Panc1 (cell line): ENCODE measurements at regions of chrX and their contacts with region 1.

Region 1: GRCh38 chrX:121579016-121579760 is 531.8 kb downstream of the GLUD2 start:
- DNase-seq: peak; percentile 1
- ATAC-seq: no peak
- H3K4me3 ChIP-seq: no peak overlapping the region
- H3K27ac ChIP-seq: no peak overlapping the region
- H3K4me1 ChIP-seq: no peaks in the 10 kb centered on the region
- H3K27me3 ChIP-seq: no peaks in the 10 kb centered on the region
- CTCF ChIP-seq: peak; percentile 20; the same call in 1 of the 2 replicates

Region 2: DNA sequence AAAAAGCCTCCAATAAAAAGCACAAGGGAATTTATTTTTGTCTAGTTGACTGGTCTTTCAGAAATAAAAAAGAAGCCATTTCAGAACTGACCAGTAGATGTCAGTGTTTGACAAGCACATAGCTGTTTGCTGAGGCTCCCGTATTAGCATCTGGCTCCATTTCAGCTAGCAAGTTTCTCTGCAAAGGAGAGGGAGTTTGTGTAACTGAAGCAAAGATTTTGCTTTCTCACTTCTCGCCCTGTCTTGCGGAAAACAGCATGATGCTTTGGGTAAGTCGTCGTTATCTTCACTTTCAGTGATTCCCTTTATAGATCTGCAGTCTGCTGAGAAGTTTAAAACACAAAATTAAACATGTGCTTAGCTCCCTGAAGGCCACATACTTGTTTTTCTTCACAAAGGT is 789.1 kb before region 1 on chrX:
- CTCF ChIA-PET with region 1: no interaction called
- POLR2A ChIA-PET with region 1: no interaction called
- in situ Hi-C with region 1: no loop called
- intact Hi-C with region 1: loop called (anchors 10 kb)
- DNase-seq: peak; percentile 53
- ATAC-seq: peak; percentile 78; the same call in 1 of the 2 replicates
- H3K4me3 ChIP-seq: no peak overlapping the region
- H3K27ac ChIP-seq: no peak overlapping the region
- H3K4me1 ChIP-seq: no peaks in the 10 kb centered on the region; the same call in 1 of the 2 replicates
- H3K27me3 ChIP-seq: no peaks in the 10 kb centered on the region; the same call in 1 of the 2 replicates
- CTCF ChIP-seq: peak; percentile 82

Region 3: DNA sequence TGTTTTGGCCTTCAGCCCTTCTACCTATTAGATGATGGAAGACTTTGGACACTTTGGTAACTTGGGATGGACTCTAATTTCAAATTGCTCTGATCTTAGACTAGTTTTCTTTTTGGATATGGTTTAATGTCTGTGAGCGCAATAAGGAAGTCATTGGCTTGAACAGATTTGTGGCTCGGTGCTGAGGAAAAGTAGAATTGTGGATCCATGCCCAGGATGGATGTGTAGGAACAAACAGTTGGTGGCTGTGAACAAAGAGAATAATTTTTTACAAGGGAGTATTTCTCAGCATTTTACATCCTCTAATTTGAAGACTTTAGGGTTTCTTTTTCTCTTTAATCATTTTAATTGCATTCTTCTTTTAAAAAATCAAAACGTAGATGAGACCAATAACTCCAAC is 204.7 kb before region 1 on chrX:
- CTCF ChIA-PET with region 1: no interaction called
- POLR2A ChIA-PET with region 1: no interaction called
- in situ Hi-C with region 1: no loop called
- intact Hi-C with region 1: no loop called
- DNase-seq: no peak
- ATAC-seq: no peak
- H3K4me3 ChIP-seq: no peak overlapping the region
- H3K27ac ChIP-seq: no peak overlapping the region
- H3K4me1 ChIP-seq: no peaks in the 10 kb centered on the region
- H3K27me3 ChIP-seq: no peaks in the 10 kb centered on the region
- CTCF ChIP-seq: no peak